Activated B cell treated with CpG ODN at 0.5 μM for 24 hours (primary cell): ENCODE measurements at regions of chr9 and their contacts with region 1.

Region 1: GRCh38 chr9:27499481-27499880 is 24.6 kb upstream of the IFNK start:
- DNase-seq: no peak
- ATAC-seq: no peak
- H3K4me3 Mint-ChIP-seq: no peak overlapping the region
- H3K27ac Mint-ChIP-seq: no peak overlapping the region
- H3K4me1 Mint-ChIP-seq: peaks cover 59% of the 10 kb centered on the region
- H3K27me3 Mint-ChIP-seq: no peaks in the 10 kb centered on the region
- CTCF ChIP-seq: no peak

Region 2: DNA sequence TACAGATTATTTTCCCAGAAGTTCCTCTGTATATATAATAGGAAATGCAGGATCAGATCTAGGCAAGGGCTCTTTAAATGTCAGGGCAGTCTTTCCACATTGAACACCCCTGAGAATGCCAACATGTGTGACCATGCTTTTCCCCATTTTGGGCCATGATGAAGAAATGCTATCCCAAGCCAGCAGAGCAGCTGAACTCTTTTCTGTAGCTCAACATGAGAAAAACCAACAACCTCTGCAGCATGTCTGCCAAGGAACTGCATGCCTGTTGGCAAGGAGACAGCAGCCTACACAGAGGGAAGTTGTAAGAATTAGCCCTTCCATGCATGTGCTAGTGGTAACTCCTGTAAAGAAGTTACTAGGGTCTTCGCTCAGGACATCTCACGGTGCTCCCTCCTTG is 15.1 kb after region 1 on chr9:
- CTCF ChIA-PET with region 1: no interaction called
- POLR2A ChIA-PET with region 1: no interaction called
- intact Hi-C with region 1: loop called (anchors 1 kb)
- DNase-seq: no peak
- ATAC-seq: no peak
- H3K4me3 Mint-ChIP-seq: no peak overlapping the region
- H3K27ac Mint-ChIP-seq: no peak overlapping the region
- H3K4me1 Mint-ChIP-seq: peaks cover 27% of the 10 kb centered on the region
- H3K27me3 Mint-ChIP-seq: no peaks in the 10 kb centered on the region
- CTCF ChIP-seq: no peak